ENCODE measurements at regions of chr11 and their contacts with region 1.

Region 1: DNA sequence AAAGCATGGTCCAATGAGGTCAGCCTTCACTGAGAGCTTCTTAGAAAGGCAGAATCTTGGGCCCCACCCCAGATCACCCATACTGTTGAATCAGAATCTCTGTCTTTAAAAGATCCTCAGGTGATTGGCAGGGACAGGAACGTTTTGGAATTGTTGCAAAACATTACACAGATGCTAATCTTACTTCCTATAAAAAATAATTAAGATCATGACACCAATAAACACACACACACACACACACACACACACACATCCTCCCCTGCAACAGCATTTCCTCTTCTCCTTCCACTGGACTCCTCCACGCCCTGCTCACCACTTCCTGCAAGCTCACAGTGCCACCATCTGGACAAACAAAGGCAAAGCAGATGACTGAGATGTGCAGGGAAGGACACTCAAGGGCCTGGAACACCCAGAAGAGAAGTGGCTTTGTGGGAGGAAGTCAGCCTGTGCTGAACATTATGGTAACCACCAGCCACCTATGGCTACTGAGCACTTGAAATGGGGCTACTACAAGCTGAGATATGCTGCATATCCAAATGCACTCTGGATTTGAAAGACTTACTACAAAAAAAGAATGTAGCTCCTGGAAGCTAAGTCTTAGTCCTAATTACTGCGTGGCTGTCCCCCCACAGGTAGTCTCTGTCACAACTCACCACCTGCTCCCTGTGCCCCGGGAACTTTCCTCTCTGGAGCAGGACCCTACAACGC is 65.6 kb downstream of the BTG4 start:
- DNase-seq: peak; percentile 92
- ATAC-seq: peak; percentile 98
- H3K4me3 ChIP-seq: no peak overlapping the region
- H3K27ac ChIP-seq: no peak overlapping the region
- H3K4me1 ChIP-seq: no peaks in the 10 kb centered on the region
- H3K27me3 ChIP-seq: no peaks in the 10 kb centered on the region
- CTCF ChIP-seq: peak; percentile 96

Region 2: GRCh38 chr11:110447897-110448745 is 998.4 kb before region 1 on chr11:
- CTCF ChIA-PET with region 1: no interaction called
- POLR2A ChIA-PET with region 1: no interaction called
- intact Hi-C with region 1: loop called (anchors 5 kb)
- DNase-seq: peak; percentile 88
- ATAC-seq: peak; percentile 49; the same call in 1 of the 2 replicates
- H3K4me3 ChIP-seq: no peak overlapping the region
- H3K27ac ChIP-seq: peak overlapping the region; percentile 79
- H3K4me1 ChIP-seq: peaks cover 21% of the 10 kb centered on the region
- H3K27me3 ChIP-seq: no peaks in the 10 kb centered on the region
- CTCF ChIP-seq: peak; percentile 90

Region 3: DNA sequence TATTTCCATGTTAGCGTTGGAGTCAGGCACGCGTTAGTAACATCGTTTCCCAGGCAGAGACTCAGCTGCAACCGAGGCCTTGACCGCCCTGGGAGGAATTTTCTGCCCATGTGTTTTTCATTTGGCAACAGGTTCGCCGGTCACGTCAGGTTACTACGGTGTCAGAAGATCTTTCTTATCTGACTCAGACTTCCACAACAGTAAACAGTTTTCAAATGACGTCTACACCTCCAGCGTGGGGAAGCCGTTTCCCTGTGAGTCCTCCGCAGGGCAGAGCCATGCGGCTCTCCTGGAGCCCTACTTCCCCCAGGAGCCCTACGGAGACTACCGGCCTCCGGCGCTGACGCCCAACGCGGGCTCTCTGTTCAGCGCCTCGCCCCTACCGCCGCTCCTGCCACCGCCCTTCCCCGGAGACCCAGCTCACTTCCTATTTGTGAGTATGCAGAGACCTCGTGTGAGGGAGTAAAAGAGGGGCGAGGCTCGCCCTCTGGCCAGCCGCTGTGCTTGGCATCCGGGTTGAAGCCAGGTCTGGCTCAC is 162.5 kb before region 1 on chr11:
- CTCF ChIA-PET with region 1: interaction called, 22 read pairs
- POLR2A ChIA-PET with region 1: no interaction called
- intact Hi-C with region 1: loop called (anchors 1 kb)
- DNase-seq: no peak
- ATAC-seq: no peak
- H3K4me3 ChIP-seq: no peak overlapping the region
- H3K27ac ChIP-seq: no peak overlapping the region
- H3K4me1 ChIP-seq: no peaks in the 10 kb centered on the region
- H3K27me3 ChIP-seq: peaks cover 61% of the 10 kb centered on the region
- CTCF ChIP-seq: no peak

Measured in PC-3 (cell line).